ENCODE measurements at regions of chr21 and their contacts with region 1.

Region 1: DNA sequence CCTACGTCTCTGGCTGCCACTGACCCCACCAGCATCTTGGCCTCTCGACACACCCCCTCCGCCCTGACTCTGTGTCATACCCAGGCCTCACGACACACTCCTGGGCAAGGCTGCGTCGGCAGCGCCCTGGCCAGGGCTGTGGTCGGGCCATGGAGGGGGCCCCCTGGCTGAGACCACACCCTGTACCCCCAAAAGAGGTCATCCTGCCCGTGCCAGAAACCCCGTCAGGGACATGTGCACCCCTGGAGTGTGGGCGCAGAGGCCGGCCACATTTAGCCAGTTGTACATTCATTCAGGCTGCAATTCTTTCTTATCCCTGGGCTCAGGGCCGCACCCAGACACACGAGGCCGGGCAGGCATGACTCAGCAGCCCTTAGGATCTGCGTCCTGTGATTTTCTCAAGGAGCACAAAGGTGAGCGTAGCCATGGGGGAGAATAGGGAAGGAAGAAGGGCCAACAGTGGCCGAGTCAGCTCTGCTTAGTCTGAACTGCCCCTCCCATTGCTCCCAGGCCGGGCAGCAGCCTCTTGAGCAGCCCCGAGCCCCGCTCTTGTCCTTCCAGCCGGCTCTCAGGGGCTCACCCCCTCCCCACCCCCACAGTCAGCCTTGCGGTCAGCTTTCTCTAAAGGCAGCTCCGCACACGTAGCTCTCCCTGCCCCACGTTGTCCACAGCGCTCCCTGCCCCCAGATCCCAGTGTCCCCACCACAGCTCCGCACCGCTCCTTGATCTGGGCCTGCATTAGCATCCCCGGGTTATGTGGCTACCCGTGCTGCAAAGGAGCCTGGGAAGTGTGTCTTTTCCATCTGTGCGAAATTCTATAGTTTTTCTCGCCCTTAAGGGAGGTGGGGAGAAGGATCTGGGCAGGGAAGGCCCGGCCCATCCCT is 7.9 kb downstream of the CSTB start:
- DNase-seq: peak; percentile 94
- H3K4me3 Mint-ChIP-seq: peak overlapping the region; percentile 45
- H3K27ac Mint-ChIP-seq: peak overlapping the region; percentile 99
- H3K4me1 Mint-ChIP-seq: peaks cover 34% of the 10 kb centered on the region
- H3K27me3 Mint-ChIP-seq: no peaks in the 10 kb centered on the region
- CTCF ChIP-seq: no peak

Region 2: GRCh38 chr21:43718872-43719747 is 49.1 kb before region 1 on chr21 and contains the start of gene PDXK:
- CTCF ChIA-PET with region 1: no interaction called
- POLR2A ChIA-PET with region 1: interaction called, 3 read pairs
- intact Hi-C with region 1: loop called (anchors 1 kb)
- DNase-seq: peak; percentile 82
- H3K4me3 Mint-ChIP-seq: peak within 1 kb of the TSS; percentile 85
- H3K27ac Mint-ChIP-seq: peak within 1 kb of the TSS; percentile 74
- H3K4me1 Mint-ChIP-seq: peaks cover 15% of the 10 kb centered on the region
- H3K27me3 Mint-ChIP-seq: no peaks in the 10 kb centered on the region
- CTCF ChIP-seq: no peak
- total RNA-seq, gene PDXK: 194 and 210 TPM in 2 replicates

Region 3: GRCh38 chr21:43758111-43758641 is 10.1 kb before region 1 on chr21:
- CTCF ChIA-PET with region 1: no interaction called
- POLR2A ChIA-PET with region 1: interaction called, 17 read pairs
- intact Hi-C with region 1: no loop called
- DNase-seq: peak; percentile 94
- H3K4me3 Mint-ChIP-seq: peak overlapping the region; percentile 44
- H3K27ac Mint-ChIP-seq: peak overlapping the region; percentile 90
- H3K4me1 Mint-ChIP-seq: peaks cover 11% of the 10 kb centered on the region
- H3K27me3 Mint-ChIP-seq: no peaks in the 10 kb centered on the region
- CTCF ChIP-seq: no peak

Region 4: GRCh38 chr21:44065428-44065827 is 297.2 kb after region 1 on chr21:
- CTCF ChIA-PET with region 1: no interaction called
- POLR2A ChIA-PET with region 1: no interaction called
- intact Hi-C with region 1: no loop called
- DNase-seq: peak; percentile 24
- H3K4me3 Mint-ChIP-seq: no peak overlapping the region
- H3K27ac Mint-ChIP-seq: no peak overlapping the region
- H3K4me1 Mint-ChIP-seq: no peaks in the 10 kb centered on the region
- H3K27me3 Mint-ChIP-seq: no peaks in the 10 kb centered on the region
- CTCF ChIP-seq: no peak

Measured in MCF 10A (cell line).